Caco-2 (cell line): ENCODE measurements at regions of chr11 and their contacts with region 1.

Region 1: DNA sequence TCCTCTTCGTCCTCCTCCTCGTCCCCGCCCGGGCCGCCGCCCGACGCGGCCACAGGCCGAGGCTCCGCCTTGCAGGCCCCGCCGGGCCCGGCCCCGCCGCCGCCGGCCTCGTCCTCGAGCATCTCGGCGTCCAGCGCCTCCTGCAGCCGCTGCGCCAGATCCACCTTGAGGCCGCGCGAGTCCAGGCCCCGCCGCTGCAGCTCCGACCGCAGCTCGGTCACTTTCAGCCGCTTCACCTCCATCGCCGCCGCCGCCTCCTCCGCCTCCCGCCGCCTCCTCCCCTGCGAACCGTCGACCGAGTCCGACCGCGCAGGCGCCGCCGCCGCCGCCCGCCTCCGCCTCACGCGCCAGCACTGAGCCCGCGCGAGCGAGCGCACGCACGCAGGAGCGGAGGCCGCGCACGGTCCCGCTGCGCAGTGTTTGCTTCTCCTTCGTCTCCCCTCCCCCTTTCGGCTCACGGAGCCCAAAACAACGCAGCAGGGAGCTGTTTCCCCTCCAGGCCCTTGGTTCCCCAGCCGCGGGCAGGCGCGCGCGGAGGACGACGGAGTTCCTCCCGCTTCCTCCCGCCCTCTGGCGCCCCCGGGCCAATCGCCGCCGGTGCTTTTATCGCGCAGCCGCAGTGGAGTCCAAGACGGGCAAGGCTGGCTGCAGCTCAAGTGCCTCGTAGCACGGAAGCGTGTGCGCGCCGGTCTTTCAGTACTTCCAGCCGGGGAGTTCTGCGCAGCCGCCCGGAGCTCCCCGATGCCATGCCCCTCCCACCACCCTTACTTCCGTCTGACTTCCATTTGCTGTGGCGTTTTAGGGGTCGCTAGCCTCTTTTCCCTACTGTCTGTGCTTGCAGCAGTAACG is at the start of gene HNRNPUL2:
- DNase-seq: peak; percentile 99
- H3K4me3 ChIP-seq: peak within 1 kb of the TSS; percentile 94
- H3K4me3 Mint-ChIP-seq: peak within 1 kb of the TSS; percentile 99
- H3K27ac Mint-ChIP-seq: peak within 1 kb of the TSS; percentile 98
- H3K4me1 ChIP-seq: peaks cover 22% of the 10 kb centered on the region
- H3K4me1 Mint-ChIP-seq: peaks cover 27% of the 10 kb centered on the region
- H3K27me3 ChIP-seq: no peaks in the 10 kb centered on the region
- H3K27me3 Mint-ChIP-seq: no peaks in the 10 kb centered on the region
- CTCF ChIP-seq: no peak
- total RNA-seq, gene HNRNPUL2: 60.0 and 62.9 TPM in 2 replicates

Region 2: GRCh38 chr11:62671575-62672389 is 55.4 kb before region 1 on chr11 and contains the starts of genes LBHD1 and UQCC3:
- CTCF ChIA-PET with region 1: interaction called, 3 read pairs
- POLR2A ChIA-PET with region 1: interaction called, 23 read pairs
- intact Hi-C with region 1: no loop called
- DNase-seq: peak; percentile 87 to 91
- H3K4me3 ChIP-seq: peak within 1 kb of the TSS; percentile 90
- H3K4me3 Mint-ChIP-seq: peak within 1 kb of the TSS; percentile 98
- H3K27ac Mint-ChIP-seq: peak within 1 kb of the TSS; percentile 99
- H3K4me1 ChIP-seq: peaks cover 27% of the 10 kb centered on the region
- H3K4me1 Mint-ChIP-seq: peaks cover 15% of the 10 kb centered on the region
- H3K27me3 ChIP-seq: no peaks in the 10 kb centered on the region
- H3K27me3 Mint-ChIP-seq: no peaks in the 10 kb centered on the region
- CTCF ChIP-seq: no peak
- total RNA-seq, gene LBHD1: 11.9 and 13.6 TPM in 2 replicates
- total RNA-seq, gene UQCC3: 23.9 and 24.0 TPM in 2 replicates

Region 3: DNA sequence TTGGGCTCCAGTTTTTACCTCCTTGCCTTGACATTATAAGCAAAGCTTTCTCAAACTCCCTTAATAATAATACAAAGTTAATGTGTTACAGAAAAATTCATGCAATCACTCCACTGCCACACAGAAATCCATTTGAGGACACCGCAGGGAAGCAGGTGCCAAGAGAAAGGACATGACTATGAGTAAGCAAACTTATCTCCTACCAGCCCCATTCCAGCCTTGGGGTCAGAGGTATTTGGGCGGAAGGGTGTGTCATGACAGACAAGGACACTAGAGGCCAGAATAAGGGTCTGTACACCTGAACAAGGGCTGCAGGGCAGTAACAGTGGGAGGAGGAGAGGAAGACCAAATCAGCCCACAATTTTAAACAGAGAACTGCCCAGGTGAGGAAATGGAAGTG is 13.8 kb before region 1 on chr11:
- CTCF ChIA-PET with region 1: no interaction called
- POLR2A ChIA-PET with region 1: interaction called, 13 read pairs
- intact Hi-C with region 1: loop called (anchors 1 kb)
- DNase-seq: peak; percentile 86 to 89
- H3K4me3 ChIP-seq: no peak overlapping the region
- H3K4me3 Mint-ChIP-seq: peak overlapping the region; percentile 42
- H3K27ac Mint-ChIP-seq: peak overlapping the region; percentile 85
- H3K4me1 ChIP-seq: peaks cover 21% of the 10 kb centered on the region
- H3K4me1 Mint-ChIP-seq: peaks cover 36% of the 10 kb centered on the region
- H3K27me3 ChIP-seq: no peaks in the 10 kb centered on the region
- H3K27me3 Mint-ChIP-seq: no peaks in the 10 kb centered on the region
- CTCF ChIP-seq: peak in 1 of 2 experiments; percentile 19

Region 4: GRCh38 chr11:62787005-62787759 is 60.0 kb after region 1 on chr11 and contains the start of gene TMEM179B:
- CTCF ChIA-PET with region 1: interaction called, 13 read pairs
- POLR2A ChIA-PET with region 1: interaction called, 8 read pairs
- intact Hi-C with region 1: loop called (anchors 2 kb)
- DNase-seq: peak; percentile 98
- H3K4me3 ChIP-seq: peak within 1 kb of the TSS; percentile 79
- H3K4me3 Mint-ChIP-seq: peak within 1 kb of the TSS; percentile 91
- H3K27ac Mint-ChIP-seq: peak within 1 kb of the TSS; percentile 95
- H3K4me1 ChIP-seq: peaks cover 7% of the 10 kb centered on the region
- H3K4me1 Mint-ChIP-seq: peaks cover 9% of the 10 kb centered on the region
- H3K27me3 ChIP-seq: no peaks in the 10 kb centered on the region
- H3K27me3 Mint-ChIP-seq: no peaks in the 10 kb centered on the region
- CTCF ChIP-seq: peak; percentile 24 to 82
- total RNA-seq, gene TMEM179B: 59.9 and 68.4 TPM in 2 replicates

Region 5: DNA sequence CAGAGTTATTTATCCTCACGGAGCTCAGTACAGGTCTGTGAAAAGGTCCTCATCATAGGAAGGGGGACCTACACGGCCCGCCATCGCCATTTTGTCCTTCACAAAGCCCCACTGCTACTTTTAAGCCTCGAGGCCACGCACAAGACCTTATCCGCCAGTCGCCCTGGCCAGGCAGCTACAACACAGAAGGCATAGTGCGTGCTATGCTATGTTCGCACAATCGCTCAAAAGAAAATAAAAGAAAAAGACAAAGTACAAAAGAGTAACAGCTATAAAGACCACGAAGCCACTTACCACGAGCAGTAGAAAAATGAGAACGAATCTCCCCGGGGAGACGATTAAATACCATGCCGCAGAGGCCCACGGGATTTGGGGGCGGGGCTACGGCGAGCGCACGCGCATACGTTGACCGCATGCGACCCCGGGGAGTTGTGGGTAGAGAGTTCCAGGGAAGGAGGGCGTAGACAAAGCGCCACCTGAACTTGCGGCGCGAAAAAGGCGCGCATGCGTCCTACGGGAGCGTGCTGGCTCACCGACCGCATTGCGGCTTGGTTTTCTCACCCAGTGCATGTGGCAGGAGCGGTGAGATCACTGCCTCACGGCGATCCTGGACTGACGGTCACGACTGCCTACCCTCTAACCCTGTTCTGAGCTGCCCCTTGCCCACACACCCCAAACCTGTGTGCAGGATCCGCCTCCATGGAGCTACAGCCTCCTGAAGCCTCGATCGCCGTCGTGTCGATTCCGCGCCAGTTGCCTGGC is 128.6 kb after region 1 on chr11:
- CTCF ChIA-PET with region 1: interaction called, 3 read pairs
- POLR2A ChIA-PET with region 1: interaction called, 4 read pairs
- intact Hi-C with region 1: loop called (anchors 10 kb)
- DNase-seq: peak; percentile 98 to 99
- H3K4me3 ChIP-seq: peak overlapping the region; percentile 92
- H3K4me3 Mint-ChIP-seq: peak overlapping the region; percentile 77
- H3K27ac Mint-ChIP-seq: peak overlapping the region; percentile 85
- H3K4me1 ChIP-seq: peaks cover 46% of the 10 kb centered on the region
- H3K4me1 Mint-ChIP-seq: peaks cover 45% of the 10 kb centered on the region
- H3K27me3 ChIP-seq: no peaks in the 10 kb centered on the region
- H3K27me3 Mint-ChIP-seq: no peaks in the 10 kb centered on the region
- CTCF ChIP-seq: no peak

Region 6: DNA sequence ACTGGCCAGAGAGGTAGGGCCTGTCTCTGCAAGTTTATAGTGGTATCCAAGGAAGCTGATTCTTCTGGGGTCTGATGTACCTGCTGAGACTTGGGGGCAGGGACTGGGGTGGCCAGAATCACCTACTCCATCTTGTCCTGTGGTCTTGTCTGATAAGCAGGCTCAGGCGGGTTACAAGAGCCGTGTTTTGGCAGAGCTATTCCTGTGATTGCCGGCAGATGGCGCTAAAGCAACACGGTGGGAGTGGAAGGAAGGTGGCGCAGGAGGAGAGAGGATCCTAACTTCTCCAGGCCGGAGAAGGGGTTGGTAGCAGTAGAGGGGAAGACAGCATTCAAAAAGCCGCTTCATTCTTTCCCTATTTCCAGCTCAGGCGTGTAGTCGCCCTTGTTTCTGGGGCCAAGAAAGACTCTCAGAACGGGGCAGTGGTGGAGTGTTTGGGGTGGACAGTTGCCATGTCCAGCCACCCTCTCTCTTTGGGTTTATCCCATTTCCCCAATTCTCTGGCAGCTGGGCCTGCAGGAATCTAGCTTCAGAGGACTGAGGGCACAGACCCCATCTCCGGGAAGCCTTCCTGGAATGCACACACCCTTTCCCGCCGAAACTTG is 178.9 kb after region 1 on chr11:
- CTCF ChIA-PET with region 1: no interaction called
- POLR2A ChIA-PET with region 1: no interaction called
- intact Hi-C with region 1: no loop called
- DNase-seq: peak; percentile 84 to 88
- H3K4me3 ChIP-seq: no peak overlapping the region
- H3K4me3 Mint-ChIP-seq: no peak overlapping the region
- H3K27ac Mint-ChIP-seq: no peak overlapping the region
- H3K4me1 ChIP-seq: peaks cover 9% of the 10 kb centered on the region; the same call in 1 of the 2 replicates
- H3K4me1 Mint-ChIP-seq: peaks cover 5% of the 10 kb centered on the region
- H3K27me3 ChIP-seq: no peaks in the 10 kb centered on the region
- H3K27me3 Mint-ChIP-seq: no peaks in the 10 kb centered on the region
- CTCF ChIP-seq: peak; percentile 98 to 99